Caco-2 (cell line): ENCODE measurements at regions of chrX and their contacts with region 1.

Region 1: DNA sequence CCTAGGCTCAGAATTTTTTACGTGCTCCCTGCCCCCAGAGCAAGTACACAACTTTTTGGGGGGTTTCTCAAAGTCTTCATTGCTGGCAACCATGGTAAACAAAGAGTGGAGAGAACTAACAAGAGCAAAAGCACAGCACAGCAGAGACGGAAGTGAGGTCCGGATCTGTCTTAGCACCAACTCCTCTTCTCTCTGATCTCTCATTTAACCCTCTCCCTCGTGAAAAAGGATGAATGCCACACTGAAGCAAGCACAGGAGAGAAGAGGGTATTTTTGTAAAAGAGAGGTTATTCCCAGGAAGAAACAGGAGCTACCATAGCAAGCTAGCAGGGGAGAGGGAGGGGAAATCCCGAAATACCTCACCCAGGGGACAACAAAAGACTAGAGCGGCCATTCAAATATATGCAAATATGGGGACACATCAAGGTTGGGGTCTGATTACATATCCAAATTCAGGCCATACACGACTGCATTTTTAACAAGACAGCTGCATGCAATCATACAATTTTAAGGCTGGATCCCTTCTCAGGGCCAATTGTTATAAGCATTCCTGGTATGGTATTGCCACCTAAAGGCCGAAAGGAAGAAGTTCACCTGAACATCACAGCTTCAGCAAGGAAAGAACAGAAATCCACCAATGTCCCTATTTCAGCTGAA is 46.6 kb downstream of the CD40LG start:
- DNase-seq: peak in 1 of 2 experiments; percentile 10
- H3K4me3 ChIP-seq: no peak overlapping the region
- H3K4me3 Mint-ChIP-seq: no peak overlapping the region
- H3K27ac Mint-ChIP-seq: no peak overlapping the region
- H3K4me1 ChIP-seq: no peaks in the 10 kb centered on the region
- H3K4me1 Mint-ChIP-seq: no peaks in the 10 kb centered on the region
- H3K27me3 ChIP-seq: no peaks in the 10 kb centered on the region
- H3K27me3 Mint-ChIP-seq: peaks cover 11% of the 10 kb centered on the region
- CTCF ChIP-seq: peak; percentile 47 to 60

Region 2: GRCh38 chrX:136519070-136519469 is 175.5 kb before region 1 on chrX:
- CTCF ChIA-PET with region 1: no interaction called
- POLR2A ChIA-PET with region 1: no interaction called
- intact Hi-C with region 1: loop called (anchors 10 kb)
- DNase-seq: no peak
- H3K4me3 ChIP-seq: no peak overlapping the region
- H3K4me3 Mint-ChIP-seq: no peak overlapping the region
- H3K27ac Mint-ChIP-seq: no peak overlapping the region
- H3K4me1 ChIP-seq: no peaks in the 10 kb centered on the region
- H3K4me1 Mint-ChIP-seq: no peaks in the 10 kb centered on the region
- H3K27me3 ChIP-seq: no peaks in the 10 kb centered on the region
- H3K27me3 Mint-ChIP-seq: peaks cover 4% of the 10 kb centered on the region
- CTCF ChIP-seq: peak in 1 of 2 experiments; percentile 16

Region 3: GRCh38 chrX:136608295-136609171 is 86.0 kb before region 1 on chrX:
- CTCF ChIA-PET with region 1: interaction called, 6 read pairs
- POLR2A ChIA-PET with region 1: no interaction called
- intact Hi-C with region 1: loop called (anchors 1 kb)
- DNase-seq: no peak
- H3K4me3 ChIP-seq: no peak overlapping the region
- H3K4me3 Mint-ChIP-seq: no peak overlapping the region
- H3K27ac Mint-ChIP-seq: no peak overlapping the region
- H3K4me1 ChIP-seq: no peaks in the 10 kb centered on the region
- H3K4me1 Mint-ChIP-seq: no peaks in the 10 kb centered on the region
- H3K27me3 ChIP-seq: no peaks in the 10 kb centered on the region
- H3K27me3 Mint-ChIP-seq: peaks cover 3% of the 10 kb centered on the region
- CTCF ChIP-seq: no peak